Activated T-helper 1 cell treated with anti-CD3 and anti-CD28 coated beads, Interleukin-12 subunit alpha, Interleukin-12 subunit beta, Interleukin-2, Interleukin-4 antibody, amounts not matched to agents 30 ng/mL and 10 ng/mL and 1 ng/mL, durations not matched to agents 14 hours and 24 hours and 36 hours (primary cell): ENCODE measurements at regions of chr1 and their contacts with region 1.

Region 1: GRCh38 chr1:223133824-223134435 is 9.1 kb downstream of the TLR5 start:
- DNase-seq: peak; percentile 67
- H3K4me3 Mint-ChIP-seq: peak overlapping the region; percentile 20
- H3K27ac Mint-ChIP-seq: no peak overlapping the region
- H3K4me1 Mint-ChIP-seq: peaks cover 19% of the 10 kb centered on the region
- H3K27me3 Mint-ChIP-seq: peaks cover 52% of the 10 kb centered on the region

Region 2: DNA sequence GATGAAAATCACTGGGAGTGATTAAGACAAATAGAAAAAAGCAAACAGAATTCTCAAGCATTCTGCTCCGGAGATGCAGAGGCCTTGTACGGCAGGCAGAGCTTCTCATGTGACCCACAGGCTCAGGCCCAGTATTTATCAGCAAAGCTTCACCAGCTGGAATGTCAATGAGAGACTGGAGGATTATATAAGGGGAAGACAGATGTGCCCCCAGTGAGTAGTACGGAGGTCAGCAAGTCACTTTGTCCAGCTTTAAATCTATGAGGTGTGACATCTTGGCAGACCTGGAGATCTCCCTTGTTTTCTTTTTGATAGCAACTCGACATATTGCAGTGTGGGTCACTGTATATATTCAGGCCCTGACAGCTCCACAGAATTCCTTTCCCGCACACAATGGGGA is 692.9 kb before region 1 on chr1:
- intact Hi-C with region 1: no loop called
- DNase-seq: no peak
- H3K4me3 Mint-ChIP-seq: no peak overlapping the region
- H3K27ac Mint-ChIP-seq: no peak overlapping the region
- H3K4me1 Mint-ChIP-seq: no peaks in the 10 kb centered on the region
- H3K27me3 Mint-ChIP-seq: no peaks in the 10 kb centered on the region

Region 3: DNA sequence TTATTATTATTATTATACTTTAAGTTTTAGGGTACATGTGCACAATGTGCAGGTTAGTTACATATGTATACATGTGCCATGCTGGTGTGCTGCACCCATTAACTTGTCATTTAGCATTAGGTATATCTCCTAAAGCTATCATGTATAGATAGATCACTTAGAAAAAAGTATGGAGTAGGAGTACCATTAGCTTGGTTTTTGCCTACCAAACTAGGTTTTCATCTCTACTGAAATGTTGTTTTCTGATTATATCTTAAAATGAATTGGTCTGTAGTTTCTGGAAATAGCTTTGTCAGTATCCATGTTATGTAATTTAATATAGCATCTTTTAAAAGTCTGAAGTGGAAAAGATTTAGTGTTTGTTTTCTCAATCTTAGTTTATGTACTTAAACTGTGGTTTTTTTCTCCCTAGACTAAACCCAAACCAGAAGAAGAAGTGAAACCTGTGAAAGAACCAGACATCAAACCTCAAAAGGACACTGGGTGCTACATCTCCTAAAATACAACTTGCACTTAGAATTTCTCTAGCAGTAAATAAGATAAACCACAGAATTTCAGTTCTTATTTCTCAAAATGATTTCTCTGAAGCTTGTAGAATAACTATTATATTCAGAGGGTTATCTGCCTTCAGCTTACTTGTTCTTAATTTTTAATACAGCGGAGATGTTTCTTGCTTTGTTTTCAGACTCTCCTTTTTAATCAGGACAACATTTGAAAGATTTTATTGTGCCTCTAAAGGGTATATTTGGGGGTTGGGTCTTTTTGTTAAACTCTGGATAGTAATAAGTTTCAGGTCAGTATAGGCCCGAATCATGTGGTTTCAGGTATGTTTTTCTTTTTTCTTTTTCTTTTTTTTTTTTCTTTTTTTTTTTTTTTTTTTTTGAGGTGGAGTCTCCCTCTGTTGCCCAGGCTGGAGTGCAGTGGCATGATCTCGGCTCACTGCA is 401.4 kb before region 1 on chr1:
- intact Hi-C with region 1: loop called (anchors 10 kb)
- DNase-seq: no peak
- H3K4me3 Mint-ChIP-seq: no peak overlapping the region
- H3K27ac Mint-ChIP-seq: peak overlapping the region; percentile 35
- H3K4me1 Mint-ChIP-seq: peaks cover 13% of the 10 kb centered on the region
- H3K27me3 Mint-ChIP-seq: no peaks in the 10 kb centered on the region

Region 4: GRCh38 chr1:223031733-223032601 is 102.0 kb before region 1 on chr1:
- intact Hi-C with region 1: no loop called
- DNase-seq: no peak
- H3K4me3 Mint-ChIP-seq: no peak overlapping the region
- H3K27ac Mint-ChIP-seq: no peak overlapping the region
- H3K4me1 Mint-ChIP-seq: no peaks in the 10 kb centered on the region
- H3K27me3 Mint-ChIP-seq: peaks cover 5% of the 10 kb centered on the region

Region 5: DNA sequence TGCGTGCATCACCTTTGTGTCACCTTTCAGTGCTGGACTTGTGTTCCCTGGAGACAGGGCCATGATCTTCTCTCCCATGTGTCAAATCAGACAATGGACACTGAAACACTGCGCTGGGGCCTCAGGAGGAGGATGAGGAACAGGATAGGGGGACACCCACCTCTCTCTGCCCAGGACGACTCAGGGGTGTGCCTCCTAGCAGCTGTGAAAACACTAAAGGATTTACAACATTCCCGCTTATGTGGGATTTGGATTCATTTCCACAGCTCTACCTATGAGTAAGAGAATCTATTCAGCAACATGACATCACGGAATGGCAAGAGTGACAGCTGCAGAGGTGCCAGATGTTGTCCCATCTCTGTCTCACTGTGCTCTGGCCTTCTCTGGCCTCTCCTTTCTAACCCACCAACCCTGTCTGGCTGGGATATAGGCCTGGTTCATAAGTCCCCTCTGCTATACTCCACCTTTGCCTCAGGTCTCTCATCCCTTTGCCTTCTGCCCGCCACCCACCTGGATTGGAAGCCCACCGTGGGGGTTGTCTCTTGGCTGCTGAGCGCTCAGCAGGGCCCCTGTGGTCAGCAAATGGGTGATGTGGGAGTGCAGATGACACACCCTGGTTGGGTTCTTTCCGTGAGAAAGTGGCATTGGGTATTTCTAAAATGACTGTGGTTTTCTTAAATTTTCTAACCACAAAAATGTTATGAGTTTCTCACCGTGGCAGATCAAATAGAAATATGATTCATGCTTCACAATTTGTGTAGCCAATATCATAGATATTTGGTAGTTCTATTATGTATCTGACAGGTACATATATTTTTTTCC is 56.2 kb after region 1 on chr1:
- intact Hi-C with region 1: loop called (anchors 2 kb)
- DNase-seq: no peak
- H3K4me3 Mint-ChIP-seq: no peak overlapping the region
- H3K27ac Mint-ChIP-seq: peak overlapping the region; percentile 53
- H3K4me1 Mint-ChIP-seq: peaks cover 12% of the 10 kb centered on the region
- H3K27me3 Mint-ChIP-seq: peaks cover 12% of the 10 kb centered on the region

Region 6: DNA sequence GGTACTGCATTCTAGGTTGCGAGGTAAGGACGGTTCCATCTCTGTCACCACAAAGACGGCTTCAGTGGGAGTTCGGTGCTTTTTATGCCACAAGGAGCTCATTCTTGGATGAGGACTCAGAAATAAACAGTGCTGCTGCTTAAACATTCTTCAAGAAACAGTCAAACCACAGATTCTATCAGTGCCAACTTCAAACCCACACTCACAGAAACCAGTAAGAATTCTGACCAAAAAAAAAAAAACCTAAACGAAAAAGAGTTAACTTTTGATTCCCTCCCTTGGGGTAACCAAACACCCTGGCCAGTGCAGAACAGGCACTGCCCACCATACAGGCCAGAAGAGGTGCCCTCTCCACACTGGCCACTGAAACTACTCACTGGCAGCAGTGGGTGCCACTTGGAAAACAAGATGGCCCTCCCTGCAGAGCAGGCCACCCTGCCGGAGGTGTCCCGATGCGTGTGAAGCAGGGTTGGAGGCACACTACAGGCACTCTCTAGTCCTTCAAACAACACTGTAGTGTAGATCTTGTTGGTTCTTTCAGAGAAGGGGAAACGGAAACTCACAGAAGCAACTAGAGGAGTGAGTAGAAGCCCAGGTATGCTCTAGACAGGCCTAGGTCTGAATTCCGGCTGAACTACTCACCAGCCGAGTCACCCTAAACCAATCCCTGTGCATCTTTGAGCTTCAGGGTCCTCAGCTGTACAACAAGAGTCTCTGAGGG is 96.4 kb after region 1 on chr1:
- intact Hi-C with region 1: loop called (anchors 1 kb)
- DNase-seq: no peak
- H3K4me3 Mint-ChIP-seq: no peak overlapping the region
- H3K27ac Mint-ChIP-seq: peak overlapping the region; percentile 53
- H3K4me1 Mint-ChIP-seq: peaks cover 17% of the 10 kb centered on the region
- H3K27me3 Mint-ChIP-seq: peaks cover 3% of the 10 kb centered on the region

Region 7: GRCh38 chr1:223244366-223245103 is 110.6 kb after region 1 on chr1:
- intact Hi-C with region 1: loop called (anchors 1 kb)
- DNase-seq: no peak
- H3K4me3 Mint-ChIP-seq: no peak overlapping the region
- H3K27ac Mint-ChIP-seq: no peak overlapping the region
- H3K4me1 Mint-ChIP-seq: peaks cover 11% of the 10 kb centered on the region
- H3K27me3 Mint-ChIP-seq: peaks cover 3% of the 10 kb centered on the region

Region 8: GRCh38 chr1:223363856-223364684 is 230.1 kb after region 1 on chr1 and contains the start of gene SUSD4:
- intact Hi-C with region 1: loop called (anchors 5 kb)
- DNase-seq: peak; percentile 13
- H3K4me3 Mint-ChIP-seq: peak within 1 kb of the TSS; percentile 77
- H3K27ac Mint-ChIP-seq: no peak within 1 kb of the TSS
- H3K4me1 Mint-ChIP-seq: no peaks in the 10 kb centered on the region
- H3K27me3 Mint-ChIP-seq: peaks cover 53% of the 10 kb centered on the region
- total RNA-seq, gene SUSD4: not detected in 2 replicates

Region 9: GRCh38 chr1:223683586-223684487 is 549.9 kb after region 1 on chr1:
- intact Hi-C with region 1: loop called (anchors 1 kb)
- DNase-seq: no peak
- H3K4me3 Mint-ChIP-seq: no peak overlapping the region
- H3K27ac Mint-ChIP-seq: no peak overlapping the region
- H3K4me1 Mint-ChIP-seq: no peaks in the 10 kb centered on the region
- H3K27me3 Mint-ChIP-seq: peaks cover 22% of the 10 kb centered on the region